ENCODE measurements at regions of chr7 and their contacts with region 1.

Region 1: DNA sequence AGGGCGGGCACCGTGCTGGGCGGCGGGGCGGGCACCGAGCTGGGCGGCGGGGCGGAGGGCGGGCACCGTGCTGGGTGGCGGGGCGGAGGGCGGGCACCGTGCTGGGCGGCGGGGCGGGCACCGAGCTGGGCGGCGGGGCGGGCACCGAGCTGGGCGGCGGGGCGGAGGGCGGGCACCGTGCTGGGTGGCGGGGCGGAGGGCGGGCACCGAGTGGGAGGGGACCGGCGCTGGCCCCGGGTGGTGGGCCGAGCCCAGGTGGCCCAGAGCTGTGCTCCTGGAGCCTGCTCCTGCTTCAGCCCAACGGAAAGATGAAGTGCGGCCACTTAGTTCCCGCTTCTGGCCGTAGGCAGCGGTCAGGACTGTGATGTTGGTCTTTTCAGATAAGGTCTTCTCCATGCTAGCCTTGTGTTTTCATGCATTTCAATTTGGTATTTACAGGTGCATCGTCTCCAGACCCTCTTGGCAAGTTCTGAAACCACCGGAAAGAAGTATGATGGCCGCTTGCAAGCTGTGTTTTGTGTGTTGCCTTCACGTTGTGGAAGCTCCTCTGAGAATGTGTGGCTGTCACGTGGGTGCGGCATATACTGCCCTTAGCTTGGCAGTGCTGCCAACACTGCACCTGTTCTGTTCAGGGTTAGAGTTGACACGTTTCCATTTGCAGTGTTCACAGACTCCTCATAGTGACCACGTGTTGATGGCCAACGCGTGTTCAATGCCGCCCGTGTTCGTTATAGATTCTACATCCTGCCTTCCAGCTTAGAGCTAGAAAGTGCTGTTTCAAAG is 25.2 kb downstream of the IQCE start:
- DNase-seq: no peak
- H3K4me3 ChIP-seq: no peak overlapping the region
- H3K27ac ChIP-seq: no peak overlapping the region
- H3K4me1 ChIP-seq: no peaks in the 10 kb centered on the region
- H3K27me3 ChIP-seq: no peaks in the 10 kb centered on the region
- CTCF ChIP-seq: no peak
- EP300 ChIP-seq: no peak
- POLR2A ChIP-seq: no peak

Region 2: GRCh38 chr7:2645274-2645868 is 61.4 kb after region 1 on chr7:
- intact Hi-C with region 1: loop called in 1 of 4 experiments (anchors 1 kb)
- DNase-seq: no peak
- H3K4me3 ChIP-seq: no peak overlapping the region
- H3K27ac ChIP-seq: no peak overlapping the region
- H3K4me1 ChIP-seq: peaks cover 18% of the 10 kb centered on the region
- H3K27me3 ChIP-seq: no peaks in the 10 kb centered on the region
- CTCF ChIP-seq: no peak
- EP300 ChIP-seq: no peak
- POLR2A ChIP-seq: no peak